K562 (cell line): ENCODE measurements at regions of chr9 and their contacts with region 1.

Region 1: GRCh38 chr9:112717661-112718341 is at the start of gene INIP:
- DNase-seq: peak; percentile 95 to 98 (median 96)
- ATAC-seq: peak; percentile 98
- H3K4me3 ChIP-seq: peak within 1 kb of the TSS; percentile 79
- H3K27ac ChIP-seq: peak within 1 kb of the TSS; percentile 91
- H3K4me1 ChIP-seq: peaks cover 0 to 6% of the 10 kb centered on the region in 2 experiments; a peak in 3 of 5 replicates
- H3K27me3 ChIP-seq: no peaks in the 10 kb centered on the region
- CTCF ChIP-seq: peak; percentile 32 to 64 (median 52); a peak in 4 of 6 replicates
- EP300 ChIP-seq: no peak
- POLR2A ChIP-seq: peak; percentile 91
- RAD21 ChIP-seq: peak; percentile 30 to 52
- polyA plus RNA-seq, gene INIP: 87.0 to 87.9 TPM

Region 2: GRCh38 chr9:112503170-112503569 is 214.6 kb before region 1 on chr9:
- CTCF ChIA-PET with region 1: no interaction called
- POLR2A ChIA-PET with region 1: no interaction called
- in situ Hi-C with region 1: no loop called
- intact Hi-C with region 1: loop called (anchors 10 kb)
- DNase-seq: peak in 1 of 4 experiments; percentile 30
- ATAC-seq: peak; percentile 44
- H3K4me3 ChIP-seq: no peak overlapping the region
- H3K27ac ChIP-seq: peak overlapping the region; percentile 12; the same call in 1 of the 3 replicates
- H3K4me1 ChIP-seq: peaks cover 5 to 9% of the 10 kb centered on the region in 2 experiments
- H3K27me3 ChIP-seq: no peaks in the 10 kb centered on the region
- CTCF ChIP-seq: no peak
- EP300 ChIP-seq: no peak
- POLR2A ChIP-seq: no peak
- RAD21 ChIP-seq: no peak

Region 3: GRCh38 chr9:112945620-112946208 is 227.9 kb after region 1 on chr9:
- CTCF ChIA-PET with region 1: no interaction called
- POLR2A ChIA-PET with region 1: no interaction called
- in situ Hi-C with region 1: no loop called
- intact Hi-C with region 1: no loop called
- DNase-seq: peak; percentile 11 to 21 (median 16)
- ATAC-seq: peak; percentile 93
- H3K4me3 ChIP-seq: no peak overlapping the region
- H3K27ac ChIP-seq: no peak overlapping the region
- H3K4me1 ChIP-seq: peaks cover 0 to 4% of the 10 kb centered on the region in 2 experiments; a peak in 1 of 5 replicates
- H3K27me3 ChIP-seq: peaks cover 0 to 3% of the 10 kb centered on the region in 2 experiments; a peak in 2 of 5 replicates
- CTCF ChIP-seq: peak; percentile 31 to 65 (median 43); a peak in 5 of 6 replicates
- EP300 ChIP-seq: no peak
- POLR2A ChIP-seq: no peak
- RAD21 ChIP-seq: no peak